Thyroid gland (tissue), 4 donors: ENCODE measurements at regions of chr18 and their contacts with region 1.

Region 1: GRCh38 chr18:51029694-51030536 is at the start of gene SMAD4:
- DNase-seq: peak; percentile 96 to 97
- H3K4me3 ChIP-seq: peak within 1 kb of the TSS; percentile 29 to 73 (median 37)
- H3K27ac ChIP-seq: peak within 1 kb of the TSS; percentile 95 to 97 (median 96)
- H3K4me1 ChIP-seq: peaks cover 11 to 39% of the 10 kb centered on the region in 2 donors
- H3K27me3 ChIP-seq: no peaks in the 10 kb centered on the region
- CTCF ChIP-seq: no peak
- POLR2A ChIP-seq: peak; percentile 65 to 96
- total RNA-seq, gene SMAD4: 163 to 305 (median 250) TPM

Region 2: GRCh38 chr18:50819728-50820378 is 210.1 kb before region 1 on chr18 and contains the start of gene MRO:
- intact Hi-C with region 1: loop called (anchors 10 kb)
- DNase-seq: peak; percentile 88 to 89
- H3K4me3 ChIP-seq: peak within 1 kb of the TSS in 2 of 3 donors; percentile 4 to 17
- H3K27ac ChIP-seq: peak within 1 kb of the TSS; percentile 71 to 87 (median 83)
- H3K4me1 ChIP-seq: peaks cover 41 to 46% of the 10 kb centered on the region in 2 donors
- H3K27me3 ChIP-seq: no peaks in the 10 kb centered on the region
- CTCF ChIP-seq: peak; percentile 58 to 97 (median 92)
- POLR2A ChIP-seq: no peak
- total RNA-seq, gene MRO: 3.9 to 13.3 (median 11.2) TPM

Region 3: GRCh38 chr18:50878345-50879301 is 151.3 kb before region 1 on chr18 and contains the start of gene ME2:
- intact Hi-C with region 1: loop called (anchors 10 kb)
- DNase-seq: peak; percentile 89 to 90
- H3K4me3 ChIP-seq: peak within 1 kb of the TSS; percentile 72 to 95 (median 88)
- H3K27ac ChIP-seq: peak within 1 kb of the TSS; percentile 97
- H3K4me1 ChIP-seq: peaks cover 0 to 6% of the 10 kb centered on the region in 2 donors
- H3K27me3 ChIP-seq: no peaks in the 10 kb centered on the region
- CTCF ChIP-seq: no peak
- POLR2A ChIP-seq: peak; percentile 80 to 98
- total RNA-seq, gene ME2: 31.9 to 51.5 (median 46.4) TPM

Region 4: GRCh38 chr18:50967714-50968661 is 61.9 kb before region 1 on chr18 and contains the start of gene ELAC1:
- intact Hi-C with region 1: loop called (anchors 10 kb)
- DNase-seq: peak; percentile 75 to 82
- H3K4me3 ChIP-seq: peak within 1 kb of the TSS; percentile 91 to 94 (median 93)
- H3K27ac ChIP-seq: peak within 1 kb of the TSS; percentile 96 to 100 (median 99)
- H3K4me1 ChIP-seq: peaks cover 26 to 34% of the 10 kb centered on the region in 2 donors
- H3K27me3 ChIP-seq: no peaks in the 10 kb centered on the region
- CTCF ChIP-seq: no peak
- POLR2A ChIP-seq: peak; percentile 86 to 92
- total RNA-seq, gene ELAC1: 9.3 to 23.5 (median 16.3) TPM